ENCODE measurements at regions of chr5 and their contacts with region 1.

Region 1: DNA sequence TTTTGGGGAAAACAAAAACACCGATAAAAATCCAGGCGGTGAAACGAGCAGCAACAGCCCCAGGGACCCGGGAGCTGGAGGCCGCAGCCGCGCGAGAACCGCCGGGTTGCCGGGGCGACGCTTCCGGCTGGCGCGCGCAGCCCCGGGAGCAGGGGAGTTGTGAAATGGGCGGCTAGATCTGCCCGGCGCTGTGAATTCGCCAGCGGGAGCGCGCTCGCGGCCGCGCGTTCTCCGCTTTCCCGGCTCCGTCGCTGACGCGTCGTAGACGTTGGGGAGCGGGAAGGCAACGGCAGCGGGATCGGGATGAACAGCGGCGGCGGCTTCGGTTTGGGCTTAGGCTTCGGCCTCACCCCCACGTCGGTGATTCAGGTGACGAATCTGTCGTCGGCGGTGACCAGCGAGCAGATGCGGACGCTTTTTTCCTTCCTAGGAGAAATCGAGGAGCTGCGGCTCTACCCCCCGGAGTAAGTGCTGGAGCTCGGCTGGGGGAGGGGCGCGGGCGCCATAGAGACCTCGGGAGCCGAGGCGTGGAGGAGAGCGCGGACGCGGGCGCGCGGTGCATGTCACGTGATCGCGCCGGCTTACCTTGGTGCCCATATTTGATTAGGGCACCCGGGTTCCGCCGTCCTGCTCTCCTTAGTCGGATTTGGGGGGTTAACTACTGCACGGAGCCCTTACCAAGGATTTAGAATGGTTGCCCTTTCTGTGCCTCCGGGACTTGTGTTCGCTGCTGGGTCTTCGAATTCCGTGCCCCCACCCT is at the start of gene SREK1:
- DNase-seq: peak; percentile 90
- H3K4me3 Mint-ChIP-seq: peak within 1 kb of the TSS; percentile 92
- H3K27ac Mint-ChIP-seq: peak within 1 kb of the TSS; percentile 98
- H3K4me1 Mint-ChIP-seq: peaks cover 53% of the 10 kb centered on the region
- H3K27me3 Mint-ChIP-seq: no peaks in the 10 kb centered on the region
- total RNA-seq, gene SREK1: 52.2 to 60.0 TPM

Region 2: GRCh38 chr5:65035211-65036206 is 1108.7 kb before region 1 on chr5:
- CTCF ChIA-PET with region 1: no interaction called
- intact Hi-C with region 1: loop called (anchors 10 kb)
- DNase-seq: peak; percentile 80
- H3K4me3 Mint-ChIP-seq: peak overlapping the region; percentile 69
- H3K27ac Mint-ChIP-seq: peak overlapping the region; percentile 85
- H3K4me1 Mint-ChIP-seq: peaks cover 27% of the 10 kb centered on the region
- H3K27me3 Mint-ChIP-seq: no peaks in the 10 kb centered on the region

Region 3: GRCh38 chr5:65624571-65625555 is 519.4 kb before region 1 on chr5 and contains the starts of genes SHLD3 and TRAPPC13:
- CTCF ChIA-PET with region 1: no interaction called
- intact Hi-C with region 1: loop called (anchors 1 kb)
- DNase-seq: peak; percentile 88
- H3K4me3 Mint-ChIP-seq: peak within 1 kb of the TSS; percentile 99
- H3K27ac Mint-ChIP-seq: peak within 1 kb of the TSS; percentile 94
- H3K4me1 Mint-ChIP-seq: peaks cover 50% of the 10 kb centered on the region
- H3K27me3 Mint-ChIP-seq: no peaks in the 10 kb centered on the region
- total RNA-seq, gene SHLD3: 2.9 to 3.1 TPM
- total RNA-seq, gene TRAPPC13: 25.7 to 29.0 TPM

Region 4: GRCh38 chr5:65742565-65743231 is 401.6 kb before region 1 on chr5:
- CTCF ChIA-PET with region 1: no interaction called
- intact Hi-C with region 1: loop called (anchors 1 kb)
- DNase-seq: peak; percentile 49
- H3K4me3 Mint-ChIP-seq: no peak overlapping the region
- H3K27ac Mint-ChIP-seq: no peak overlapping the region
- H3K4me1 Mint-ChIP-seq: peaks cover 13% of the 10 kb centered on the region
- H3K27me3 Mint-ChIP-seq: no peaks in the 10 kb centered on the region

Region 5: DNA sequence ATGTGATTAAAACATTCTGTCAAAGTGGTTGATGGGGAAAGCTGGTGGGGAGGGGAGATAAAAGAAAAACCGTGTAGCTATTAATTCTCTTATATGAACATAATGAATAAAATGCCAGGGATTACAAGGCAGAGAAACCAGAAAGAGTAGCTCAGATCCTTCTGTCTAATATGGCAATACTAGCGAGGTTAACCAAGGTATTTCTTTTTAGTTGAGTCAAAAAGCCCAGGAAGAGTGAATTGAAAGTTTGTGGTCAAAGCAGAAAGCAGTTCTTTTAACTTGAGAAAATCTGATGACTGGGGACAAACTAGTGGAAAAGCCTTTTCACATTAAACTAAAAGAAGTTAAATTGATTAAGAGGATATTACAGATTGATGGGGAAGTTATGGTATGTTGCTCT is 141.8 kb before region 1 on chr5:
- CTCF ChIA-PET with region 1: no interaction called
- intact Hi-C with region 1: loop called (anchors 5 kb)
- DNase-seq: no peak
- H3K4me3 Mint-ChIP-seq: no peak overlapping the region
- H3K27ac Mint-ChIP-seq: no peak overlapping the region
- H3K4me1 Mint-ChIP-seq: peaks cover 33% of the 10 kb centered on the region
- H3K27me3 Mint-ChIP-seq: no peaks in the 10 kb centered on the region

Region 6: DNA sequence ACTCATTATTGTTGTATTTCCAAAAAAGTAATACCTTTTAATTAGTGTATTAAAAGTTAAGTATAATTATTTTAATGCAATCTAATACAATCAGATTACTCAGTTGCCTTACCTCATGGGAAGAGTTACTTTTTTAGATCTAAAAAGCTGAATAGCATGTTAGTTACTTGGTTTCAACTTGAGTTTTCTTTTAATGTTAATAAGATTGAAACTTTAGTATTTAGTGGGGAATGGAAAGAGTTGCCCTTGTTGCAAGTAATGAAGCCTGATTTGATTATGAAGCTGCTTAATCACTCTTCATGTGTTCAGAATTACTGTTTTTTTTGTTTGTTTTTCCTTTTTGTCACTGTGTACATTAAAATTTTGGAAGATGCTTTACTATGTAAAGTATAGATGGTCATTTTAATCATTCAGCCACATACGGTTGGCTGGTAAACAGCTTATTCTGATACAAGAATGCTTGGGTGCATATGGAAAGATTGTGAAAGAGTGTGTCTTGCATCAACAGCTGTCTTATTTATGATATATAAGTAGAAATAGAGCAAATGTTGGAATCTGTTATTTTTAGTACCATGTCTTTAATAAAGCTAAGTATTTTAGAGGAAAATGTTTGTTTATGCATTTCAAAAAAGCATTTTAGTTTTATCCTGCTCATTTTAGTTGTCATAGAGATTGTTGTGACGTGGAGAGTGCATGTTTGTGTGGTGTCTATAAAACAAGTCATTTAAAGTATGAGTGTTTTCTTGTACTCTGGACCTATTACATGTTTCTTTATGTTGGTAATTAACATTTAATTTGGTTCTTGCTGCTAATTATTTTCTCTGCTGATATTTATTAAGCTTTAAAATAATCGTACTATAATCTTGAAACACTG is 36.3 kb after region 1 on chr5:
- CTCF ChIA-PET with region 1: no interaction called
- intact Hi-C with region 1: no loop called
- DNase-seq: no peak
- H3K4me3 Mint-ChIP-seq: no peak overlapping the region
- H3K27ac Mint-ChIP-seq: no peak overlapping the region
- H3K4me1 Mint-ChIP-seq: peaks cover 20% of the 10 kb centered on the region
- H3K27me3 Mint-ChIP-seq: no peaks in the 10 kb centered on the region

Region 7: GRCh38 chr5:66306105-66306843 is 162.0 kb after region 1 on chr5:
- CTCF ChIA-PET with region 1: no interaction called
- intact Hi-C with region 1: no loop called
- DNase-seq: peak; percentile 52
- H3K4me3 Mint-ChIP-seq: no peak overlapping the region
- H3K27ac Mint-ChIP-seq: no peak overlapping the region
- H3K4me1 Mint-ChIP-seq: no peaks in the 10 kb centered on the region
- H3K27me3 Mint-ChIP-seq: peaks cover 8% of the 10 kb centered on the region

Region 8: GRCh38 chr5:66553916-66554575 is 409.8 kb after region 1 on chr5:
- CTCF ChIA-PET with region 1: no interaction called
- intact Hi-C with region 1: no loop called
- DNase-seq: peak; percentile 77
- H3K4me3 Mint-ChIP-seq: no peak overlapping the region
- H3K27ac Mint-ChIP-seq: peak overlapping the region; percentile 13
- H3K4me1 Mint-ChIP-seq: peaks cover 29% of the 10 kb centered on the region
- H3K27me3 Mint-ChIP-seq: peaks cover 22% of the 10 kb centered on the region

Region 9: DNA sequence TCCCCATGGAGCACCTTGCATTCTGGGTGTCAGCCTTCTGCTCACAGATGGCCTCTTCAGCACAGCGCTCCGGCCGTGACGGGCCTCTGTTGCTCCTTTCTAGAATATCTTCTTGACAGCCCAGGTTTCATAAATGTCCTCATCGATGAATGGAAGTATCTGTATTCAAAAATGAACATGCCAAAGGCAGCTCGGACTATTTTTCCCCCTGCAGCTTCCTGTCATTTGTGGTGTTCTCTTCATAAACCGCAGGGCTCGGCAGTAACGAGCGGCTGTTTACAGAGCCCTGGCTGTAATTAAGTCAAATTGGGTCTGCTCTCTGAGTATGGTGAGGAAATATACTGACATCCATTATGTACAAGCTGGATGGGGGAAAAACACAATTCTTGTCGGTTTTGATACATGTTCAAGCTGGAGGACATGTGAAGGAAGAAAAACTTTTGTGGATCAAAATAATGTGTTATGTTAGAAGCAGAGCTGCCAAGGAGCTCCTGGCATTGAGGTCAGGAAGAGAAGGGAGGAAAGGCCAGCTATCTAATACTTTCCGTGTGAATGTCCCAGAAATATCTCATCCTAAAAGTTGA is 1206.5 kb after region 1 on chr5:
- CTCF ChIA-PET with region 1: no interaction called
- intact Hi-C with region 1: no loop called
- DNase-seq: peak; percentile 21
- H3K4me3 Mint-ChIP-seq: peak overlapping the region; percentile 47
- H3K27ac Mint-ChIP-seq: no peak overlapping the region
- H3K4me1 Mint-ChIP-seq: peaks cover 15% of the 10 kb centered on the region
- H3K27me3 Mint-ChIP-seq: no peaks in the 10 kb centered on the region

Measured in activated naive CD4-positive, alpha-beta T cell treated with anti-CD3 and anti-CD28 coated beads for 36 hours (primary cell).